ENCODE measurements at regions of chr4 and their contacts with region 1.

Region 1: GRCh38 chr4:21790438-21791029 is 158.0 kb downstream of the KCNIP4 start:
- DNase-seq: no peak
- H3K4me3 ChIP-seq: no peak overlapping the region
- H3K27ac ChIP-seq: no peak overlapping the region
- H3K27me3 ChIP-seq: no peaks in the 10 kb centered on the region
- CTCF ChIP-seq: peak; percentile 20

Region 2: DNA sequence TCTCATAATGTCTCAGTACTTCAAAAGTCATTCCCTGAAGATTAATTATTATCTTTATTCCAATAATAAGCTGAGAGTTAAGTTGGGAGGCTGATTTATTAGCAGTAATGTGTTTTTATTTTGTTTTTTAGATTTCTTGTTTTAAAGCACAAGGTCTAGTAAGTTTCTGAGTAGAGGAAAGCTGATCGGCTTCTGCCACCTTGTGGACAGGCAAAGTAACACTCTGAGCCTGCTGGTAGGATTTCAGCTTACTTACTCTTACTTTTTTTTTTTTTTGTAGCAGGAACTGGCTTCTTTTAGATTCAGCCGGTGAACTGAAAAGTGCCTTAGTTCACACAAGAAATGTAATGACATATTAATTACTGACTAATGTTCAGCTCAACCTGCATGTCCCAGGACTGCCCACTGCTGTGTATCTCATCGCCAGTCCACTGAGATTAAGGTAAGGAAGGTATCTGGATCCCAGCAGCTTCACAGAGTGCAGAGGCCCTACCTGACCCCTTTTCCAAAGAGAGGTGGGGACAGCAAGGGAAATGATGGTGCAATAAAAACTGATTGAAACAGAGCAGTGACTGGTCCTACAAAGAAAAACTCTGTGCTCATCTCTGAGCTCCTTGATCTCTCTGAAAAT is 598.8 kb after region 1 on chr4:
- in situ Hi-C with region 1: loop called (anchors 25 kb)
- DNase-seq: peak; percentile 77
- H3K4me3 ChIP-seq: no peak overlapping the region
- H3K27ac ChIP-seq: no peak overlapping the region
- H3K27me3 ChIP-seq: no peaks in the 10 kb centered on the region
- CTCF ChIP-seq: peak; percentile 87